Dendritic cell treated with granulocyte-macrophage colony-stimulating factor and Interleukin-4, amounts not matched to agents 40 ng/mL and 50 ng/mL, for 4 days (primary cell): ENCODE measurements at regions of chr1 and their contacts with region 1.

Region 1: GRCh38 chr1:51192213-51192843 is 43.7 kb upstream of the RNF11 start:
- H3K4me3 Mint-ChIP-seq: no peak overlapping the region
- H3K27ac Mint-ChIP-seq: no peak overlapping the region
- H3K4me1 Mint-ChIP-seq: no peaks in the 10 kb centered on the region
- H3K27me3 Mint-ChIP-seq: peaks cover 8% of the 10 kb centered on the region

Region 2: DNA sequence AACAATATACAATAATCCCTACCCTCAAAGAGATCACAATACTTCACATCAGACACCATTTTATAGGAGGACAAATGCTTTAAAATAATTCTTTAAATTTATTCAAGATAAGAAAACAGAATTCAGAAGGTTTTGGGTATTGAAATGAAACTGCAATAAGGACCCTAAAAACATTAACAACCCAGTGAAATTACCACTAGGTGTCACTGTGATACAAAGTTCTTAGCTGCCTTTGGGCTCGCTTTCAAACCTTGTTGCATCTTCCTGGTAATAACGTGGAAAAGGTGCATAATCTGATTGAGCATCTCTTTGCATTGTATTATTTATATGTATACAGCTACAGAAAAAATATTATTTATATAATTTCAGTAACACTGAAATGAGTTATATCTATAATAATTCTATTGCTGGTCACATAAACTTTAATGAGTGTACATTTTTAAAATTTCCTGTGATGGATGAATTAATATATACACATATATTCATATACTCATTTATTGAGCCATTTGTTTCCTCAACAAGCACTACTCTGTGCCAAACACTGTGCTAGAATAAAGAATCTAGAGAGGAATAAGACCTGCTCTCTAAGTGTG is 417.5 kb before region 1 on chr1:
- intact Hi-C with region 1: loop called (anchors 2 kb)
- H3K4me3 Mint-ChIP-seq: no peak overlapping the region
- H3K27ac Mint-ChIP-seq: no peak overlapping the region
- H3K4me1 Mint-ChIP-seq: peaks cover 4% of the 10 kb centered on the region
- H3K27me3 Mint-ChIP-seq: no peaks in the 10 kb centered on the region

Region 3: GRCh38 chr1:50929376-50929958 is 262.9 kb before region 1 on chr1:
- intact Hi-C with region 1: loop called (anchors 2 kb)
- H3K4me3 Mint-ChIP-seq: no peak overlapping the region
- H3K27ac Mint-ChIP-seq: no peak overlapping the region
- H3K4me1 Mint-ChIP-seq: peaks cover 11% of the 10 kb centered on the region
- H3K27me3 Mint-ChIP-seq: no peaks in the 10 kb centered on the region

Region 4: GRCh38 chr1:51088488-51088887 is 103.8 kb before region 1 on chr1:
- intact Hi-C with region 1: loop called (anchors 1 kb)
- H3K4me3 Mint-ChIP-seq: no peak overlapping the region
- H3K27ac Mint-ChIP-seq: no peak overlapping the region
- H3K4me1 Mint-ChIP-seq: peaks cover 12% of the 10 kb centered on the region
- H3K27me3 Mint-ChIP-seq: peaks cover 33% of the 10 kb centered on the region

Region 5: DNA sequence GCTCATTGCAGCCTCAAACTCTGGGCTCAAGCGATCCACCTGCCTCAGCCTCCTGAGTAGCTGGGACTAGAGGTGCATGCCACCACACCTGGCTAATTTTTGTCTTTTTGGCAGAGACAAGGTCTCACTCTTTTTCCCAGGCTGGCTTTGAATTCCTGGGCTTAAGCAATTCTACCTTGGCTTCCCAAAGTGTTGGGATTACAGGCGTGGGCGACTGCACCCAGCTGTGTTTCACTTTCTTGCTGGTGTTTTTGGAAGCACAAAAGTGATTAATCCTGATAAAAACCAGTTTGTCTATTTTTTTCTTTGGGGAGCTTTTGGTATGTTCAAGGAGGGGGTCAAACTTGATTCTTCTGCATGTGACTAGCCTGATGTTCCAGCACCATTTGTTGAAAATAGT is 63.0 kb after region 1 on chr1:
- intact Hi-C with region 1: no loop called
- H3K4me3 Mint-ChIP-seq: no peak overlapping the region
- H3K27ac Mint-ChIP-seq: no peak overlapping the region
- H3K4me1 Mint-ChIP-seq: peaks cover 11% of the 10 kb centered on the region
- H3K27me3 Mint-ChIP-seq: no peaks in the 10 kb centered on the region

Region 6: DNA sequence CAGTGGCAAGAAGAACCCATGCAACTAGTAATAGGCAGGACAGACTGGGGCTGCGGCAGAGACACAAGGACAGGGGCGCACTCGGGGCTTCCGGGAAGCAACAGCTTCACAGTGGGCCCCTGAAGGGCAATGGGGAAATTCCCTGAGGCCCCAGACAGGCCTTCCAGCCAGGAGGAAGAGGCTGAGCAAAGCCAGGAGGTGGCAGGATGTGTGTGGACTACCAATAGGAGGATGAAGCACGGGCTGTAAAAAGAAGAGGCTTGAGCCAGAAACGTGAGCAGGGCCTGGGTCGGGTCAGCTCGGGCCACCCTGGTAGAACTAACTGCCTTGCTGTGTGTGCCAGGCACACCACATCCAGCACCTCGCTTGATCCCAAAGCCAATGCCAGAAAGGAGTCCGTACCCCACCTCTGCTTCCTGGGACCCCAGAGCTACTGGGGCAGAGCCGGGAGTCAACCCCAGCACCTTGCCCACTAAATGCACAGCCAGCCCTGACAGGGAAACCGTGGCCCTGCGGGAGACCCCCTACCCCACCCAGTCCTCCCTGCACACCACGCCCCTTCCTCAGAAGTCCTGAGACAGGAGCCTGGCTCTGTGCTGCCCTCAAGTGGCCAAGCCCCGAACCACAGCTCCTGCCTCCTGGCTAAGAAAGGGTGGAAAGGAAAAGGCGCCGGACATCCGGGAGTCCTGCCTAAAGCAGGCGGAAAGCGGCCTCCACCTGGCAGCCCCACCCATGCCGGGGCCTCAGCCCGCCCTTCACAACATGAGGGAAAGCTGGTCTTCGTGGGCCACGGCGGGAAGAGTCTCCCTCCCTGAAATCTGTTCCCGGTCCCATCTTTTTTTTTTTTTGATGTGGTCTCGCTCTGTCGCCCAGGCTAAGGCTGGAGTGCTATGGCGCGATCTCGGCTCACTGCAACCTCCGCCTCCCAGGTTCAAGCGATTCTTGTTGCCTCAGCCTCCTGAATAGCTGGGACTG is 104.3 kb after region 1 on chr1:
- intact Hi-C with region 1: loop called (anchors 10 kb)
- H3K4me3 Mint-ChIP-seq: peak overlapping the region; percentile 70
- H3K27ac Mint-ChIP-seq: peak overlapping the region; percentile 3
- H3K4me1 Mint-ChIP-seq: peaks cover 32% of the 10 kb centered on the region
- H3K27me3 Mint-ChIP-seq: peaks cover 14% of the 10 kb centered on the region